ENCODE measurements at regions of chr1 and their contacts with region 1.

Region 1: GRCh38 chr1:203473281-203473680 is 2.3 kb upstream of the PRELP start:
- DNase-seq: no peak
- H3K4me3 Mint-ChIP-seq: no peak overlapping the region
- H3K27ac Mint-ChIP-seq: no peak overlapping the region
- H3K4me1 Mint-ChIP-seq: peaks cover 9% of the 10 kb centered on the region
- H3K27me3 Mint-ChIP-seq: peaks cover 93% of the 10 kb centered on the region
- CTCF ChIP-seq: no peak

Region 2: GRCh38 chr1:203678948-203679661 is 205.8 kb after region 1 on chr1:
- CTCF ChIA-PET with region 1: interaction called, 11 read pairs
- intact Hi-C with region 1: no loop called
- DNase-seq: no peak
- H3K4me3 Mint-ChIP-seq: no peak overlapping the region
- H3K27ac Mint-ChIP-seq: no peak overlapping the region
- H3K4me1 Mint-ChIP-seq: peaks cover 18% of the 10 kb centered on the region
- H3K27me3 Mint-ChIP-seq: peaks cover 13% of the 10 kb centered on the region
- CTCF ChIP-seq: no peak

Measured in Calu3 (cell line).